CD8-positive, alpha-beta T cell (primary cell): ENCODE measurements at regions of chr16 and their contacts with region 1.

Region 1: DNA sequence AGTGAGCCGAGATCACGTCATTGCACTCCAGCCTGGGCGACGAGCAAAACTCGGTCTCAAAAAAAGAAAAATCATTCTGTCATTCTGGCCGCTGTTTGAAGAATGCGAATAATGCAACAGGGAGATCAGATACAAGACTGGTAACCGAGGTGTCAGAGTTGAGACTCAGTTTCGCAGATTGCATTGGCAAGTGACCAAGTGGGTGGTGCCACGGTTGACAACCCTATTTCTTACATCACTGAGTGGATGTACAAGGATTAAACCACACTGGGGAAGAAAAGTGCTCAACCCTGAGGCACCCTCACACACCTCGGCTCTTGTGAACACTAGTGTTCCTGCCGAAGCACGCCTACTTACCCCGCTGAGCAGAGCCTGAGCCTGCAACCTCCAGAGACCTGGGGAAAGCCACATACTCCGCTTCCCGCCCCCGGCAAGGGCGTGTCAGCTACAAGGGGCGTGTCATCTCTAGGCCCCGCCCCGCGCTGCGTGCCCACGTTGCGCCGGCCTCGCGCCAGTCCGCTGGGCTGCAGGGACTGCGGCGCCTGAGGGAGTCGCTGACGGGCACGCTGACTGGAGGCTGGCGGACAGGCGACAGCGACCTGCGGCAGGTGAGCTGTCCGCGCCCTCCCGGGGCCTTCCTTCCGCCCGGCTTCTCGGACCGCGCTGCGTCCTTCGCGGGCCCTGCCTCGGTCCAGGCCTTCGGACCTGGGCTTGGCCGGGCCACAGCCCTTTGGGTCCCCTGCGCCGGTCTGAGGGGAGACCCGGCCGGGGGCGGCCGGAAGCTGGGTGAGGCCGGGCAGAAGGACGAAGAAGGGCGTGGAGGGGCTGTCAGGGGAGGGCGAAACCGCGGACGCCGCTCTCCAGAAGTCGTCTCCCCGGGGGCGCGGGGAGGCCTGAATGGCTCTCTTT is at the start of gene HMOX2:
- DNase-seq: peak; percentile 86 to 98 (median 93)
- ATAC-seq: peak; percentile 83
- H3K4me3 ChIP-seq: peak within 1 kb of the TSS; percentile 85 to 98
- H3K4me3 Mint-ChIP-seq: peak within 1 kb of the TSS; percentile 90
- H3K27ac ChIP-seq: peak within 1 kb of the TSS; percentile 72 to 85
- H3K27ac Mint-ChIP-seq: peak within 1 kb of the TSS; percentile 92
- H3K4me1 ChIP-seq: peaks cover 38% of the 10 kb centered on the region
- H3K4me1 Mint-ChIP-seq: peaks cover 46% of the 10 kb centered on the region
- H3K27me3 ChIP-seq: no peaks in the 10 kb centered on the region
- H3K27me3 Mint-ChIP-seq: no peaks in the 10 kb centered on the region
- CTCF ChIP-seq: no peak
- total RNA-seq, gene HMOX2: 31.7 to 36.4 TPM

Region 2: GRCh38 chr16:4271176-4272066 is 204.7 kb before region 1 on chr16:
- CTCF ChIA-PET with region 1: no interaction called
- POLR2A ChIA-PET with region 1: no interaction called
- intact Hi-C with region 1: loop called in 1 of 2 experiments (anchors 1 kb)
- DNase-seq: peak; percentile 72 to 93 (median 89)
- ATAC-seq: peak; percentile 84
- H3K4me3 ChIP-seq: peak overlapping the region; percentile 91 to 99
- H3K4me3 Mint-ChIP-seq: peak overlapping the region; percentile 88
- H3K27ac ChIP-seq: peak overlapping the region; percentile 50 to 76
- H3K27ac Mint-ChIP-seq: peak overlapping the region; percentile 57
- H3K4me1 ChIP-seq: peaks cover 13% of the 10 kb centered on the region
- H3K4me1 Mint-ChIP-seq: peaks cover 15% of the 10 kb centered on the region
- H3K27me3 ChIP-seq: no peaks in the 10 kb centered on the region
- H3K27me3 Mint-ChIP-seq: no peaks in the 10 kb centered on the region
- CTCF ChIP-seq: no peak

Region 3: DNA sequence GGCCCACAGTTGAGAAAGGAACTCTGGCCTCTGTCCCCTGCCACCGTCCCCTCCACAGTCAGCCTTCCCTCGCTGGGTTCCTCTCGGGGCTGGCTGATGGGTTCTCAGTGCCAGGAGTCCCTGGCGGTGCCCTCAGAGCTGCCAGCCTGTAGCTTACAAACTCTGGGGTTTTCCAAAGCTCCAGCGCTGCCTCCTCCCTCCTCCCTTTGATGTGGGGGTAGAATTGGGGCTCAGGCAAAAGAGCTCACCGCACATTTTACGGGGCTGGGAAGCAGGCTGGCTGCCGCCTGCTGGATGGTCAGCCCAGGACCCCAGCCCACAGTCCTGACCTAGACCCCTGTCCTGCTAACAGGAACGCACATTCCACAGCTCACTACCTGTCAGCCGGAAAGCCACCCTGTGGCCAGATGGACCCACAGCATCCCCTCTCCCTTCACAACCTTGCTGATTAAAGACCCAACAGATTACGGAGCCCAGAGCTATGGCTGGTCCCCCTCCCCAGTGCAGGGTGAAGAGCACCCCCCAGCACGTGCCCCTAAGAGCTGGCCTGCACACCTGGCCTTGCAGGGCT is 98.5 kb before region 1 on chr16:
- CTCF ChIA-PET with region 1: no interaction called
- POLR2A ChIA-PET with region 1: no interaction called
- intact Hi-C with region 1: no loop called
- DNase-seq: peak in 1 of 9 experiments; percentile 32
- ATAC-seq: no peak
- H3K4me3 ChIP-seq: no peak overlapping the region
- H3K4me3 Mint-ChIP-seq: peak overlapping the region; percentile 15
- H3K27ac ChIP-seq: no peak overlapping the region
- H3K27ac Mint-ChIP-seq: no peak overlapping the region
- H3K4me1 ChIP-seq: peaks cover 9% of the 10 kb centered on the region
- H3K4me1 Mint-ChIP-seq: peaks cover 19% of the 10 kb centered on the region
- H3K27me3 ChIP-seq: no peaks in the 10 kb centered on the region
- H3K27me3 Mint-ChIP-seq: no peaks in the 10 kb centered on the region
- CTCF ChIP-seq: no peak

Region 4: GRCh38 chr16:4425378-4426020 is 50.6 kb before region 1 on chr16 and contains the start of gene DNAJA3:
- CTCF ChIA-PET with region 1: interaction called, 4 read pairs
- POLR2A ChIA-PET with region 1: interaction called, 4 read pairs
- intact Hi-C with region 1: loop called (anchors 1 to 2 kb)
- DNase-seq: peak; percentile 80 to 97 (median 92)
- ATAC-seq: peak; percentile 84
- H3K4me3 ChIP-seq: peak within 1 kb of the TSS; percentile 83 to 100
- H3K4me3 Mint-ChIP-seq: peak within 1 kb of the TSS; percentile 96
- H3K27ac ChIP-seq: peak within 1 kb of the TSS; percentile 96 to 100
- H3K27ac Mint-ChIP-seq: peak within 1 kb of the TSS; percentile 99
- H3K4me1 ChIP-seq: peaks cover 23% of the 10 kb centered on the region
- H3K4me1 Mint-ChIP-seq: peaks cover 32% of the 10 kb centered on the region
- H3K27me3 ChIP-seq: no peaks in the 10 kb centered on the region
- H3K27me3 Mint-ChIP-seq: no peaks in the 10 kb centered on the region
- CTCF ChIP-seq: no peak
- total RNA-seq, gene DNAJA3: 13.8 to 17.4 TPM

Region 5: DNA sequence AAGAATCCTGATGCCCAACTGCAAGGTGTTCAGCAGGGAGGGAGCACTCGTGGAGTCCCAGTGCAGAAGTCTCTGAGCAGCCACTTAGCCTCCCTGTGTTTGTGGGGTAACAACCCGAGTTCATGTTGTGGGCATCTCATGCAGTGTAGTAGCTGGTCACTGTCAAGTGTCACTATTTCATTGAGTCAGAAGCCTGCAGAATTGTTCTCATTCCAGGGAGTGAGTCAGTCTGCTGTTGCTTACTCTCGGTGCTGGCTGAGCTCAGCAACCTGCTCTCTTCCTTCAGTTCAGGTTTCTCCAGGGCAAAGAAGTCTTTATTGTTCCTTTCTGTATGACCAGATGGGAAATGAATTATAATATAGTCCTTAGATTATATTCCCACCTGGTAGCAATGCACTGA is 24.1 kb after region 1 on chr16:
- CTCF ChIA-PET with region 1: interaction called, 73 read pairs
- POLR2A ChIA-PET with region 1: interaction called, 75 read pairs
- intact Hi-C with region 1: loop called (anchors 1 kb)
- DNase-seq: no peak
- ATAC-seq: no peak
- H3K4me3 ChIP-seq: no peak overlapping the region
- H3K4me3 Mint-ChIP-seq: no peak overlapping the region
- H3K27ac ChIP-seq: peak overlapping the region in 1 of 2 experiments; percentile 26
- H3K27ac Mint-ChIP-seq: peak overlapping the region; percentile 98
- H3K4me1 ChIP-seq: peaks cover 91% of the 10 kb centered on the region
- H3K4me1 Mint-ChIP-seq: peaks cover 86% of the 10 kb centered on the region
- H3K27me3 ChIP-seq: no peaks in the 10 kb centered on the region
- H3K27me3 Mint-ChIP-seq: no peaks in the 10 kb centered on the region
- CTCF ChIP-seq: no peak

Region 6: GRCh38 chr16:4544473-4544872 is 68.3 kb after region 1 on chr16:
- CTCF ChIA-PET with region 1: interaction called, 13 read pairs
- POLR2A ChIA-PET with region 1: interaction called, 8 read pairs
- intact Hi-C with region 1: loop called (anchors 1 to 2 kb)
- DNase-seq: no peak
- ATAC-seq: no peak
- H3K4me3 ChIP-seq: no peak overlapping the region
- H3K4me3 Mint-ChIP-seq: no peak overlapping the region
- H3K27ac ChIP-seq: no peak overlapping the region
- H3K27ac Mint-ChIP-seq: no peak overlapping the region
- H3K4me1 ChIP-seq: peaks cover 9% of the 10 kb centered on the region
- H3K4me1 Mint-ChIP-seq: peaks cover 3% of the 10 kb centered on the region
- H3K27me3 ChIP-seq: no peaks in the 10 kb centered on the region
- H3K27me3 Mint-ChIP-seq: no peaks in the 10 kb centered on the region
- CTCF ChIP-seq: no peak

Region 7: DNA sequence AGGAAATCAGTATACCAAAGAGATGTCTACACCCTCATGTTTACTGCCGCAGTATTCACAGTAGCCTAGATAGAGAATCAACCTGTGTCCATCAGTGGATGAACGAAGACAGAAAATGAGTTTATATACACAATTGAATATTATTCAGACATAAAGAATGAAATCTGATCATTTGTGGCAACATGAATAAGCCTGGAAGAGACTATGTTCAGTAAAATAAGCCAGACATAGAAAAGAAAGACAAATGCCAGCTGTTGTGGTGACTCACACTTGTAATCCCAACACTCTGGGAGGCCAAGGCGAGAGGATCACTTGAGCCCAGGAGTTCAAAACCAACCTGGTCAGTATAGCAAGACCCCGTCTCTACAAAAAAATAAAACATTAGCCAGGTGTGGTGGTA is 233.3 kb after region 1 on chr16:
- CTCF ChIA-PET with region 1: no interaction called
- POLR2A ChIA-PET with region 1: no interaction called
- intact Hi-C with region 1: no loop called
- DNase-seq: no peak
- ATAC-seq: no peak
- H3K4me3 ChIP-seq: no peak overlapping the region
- H3K4me3 Mint-ChIP-seq: no peak overlapping the region
- H3K27ac ChIP-seq: no peak overlapping the region
- H3K27ac Mint-ChIP-seq: no peak overlapping the region
- H3K4me1 ChIP-seq: no peaks in the 10 kb centered on the region
- H3K4me1 Mint-ChIP-seq: no peaks in the 10 kb centered on the region
- H3K27me3 ChIP-seq: no peaks in the 10 kb centered on the region
- H3K27me3 Mint-ChIP-seq: no peaks in the 10 kb centered on the region
- CTCF ChIP-seq: no peak

Region 8: GRCh38 chr16:4957720-4958509 is 481.8 kb after region 1 on chr16 and contains the start of gene SEC14L5:
- CTCF ChIA-PET with region 1: no interaction called
- POLR2A ChIA-PET with region 1: no interaction called
- intact Hi-C with region 1: loop called in 1 of 2 experiments (anchors 5 kb)
- DNase-seq: peak; percentile 72 to 92 (median 87)
- ATAC-seq: peak; percentile 98
- H3K4me3 ChIP-seq: peak within 1 kb of the TSS; percentile 40 to 70
- H3K4me3 Mint-ChIP-seq: peak within 1 kb of the TSS; percentile 82
- H3K27ac ChIP-seq: no peak within 1 kb of the TSS
- H3K27ac Mint-ChIP-seq: no peak within 1 kb of the TSS
- H3K4me1 ChIP-seq: peaks cover 15% of the 10 kb centered on the region
- H3K4me1 Mint-ChIP-seq: peaks cover 20% of the 10 kb centered on the region
- H3K27me3 ChIP-seq: peaks cover 6 to 22% of the 10 kb centered on the region in 2 experiments
- H3K27me3 Mint-ChIP-seq: peaks cover 55% of the 10 kb centered on the region
- CTCF ChIP-seq: no peak
- total RNA-seq, gene SEC14L5: not detected